ENCODE measurements at regions of chr1 and their contacts with region 1.

Region 1: GRCh38 chr1:212469701-212470458 is 37.2 kb downstream of the NENF start:
- DNase-seq: no peak
- ATAC-seq: no peak
- H3K4me3 ChIP-seq: no peak overlapping the region
- H3K4me3 Mint-ChIP-seq: no peak overlapping the region
- H3K27ac ChIP-seq: no peak overlapping the region
- H3K27ac Mint-ChIP-seq: no peak overlapping the region
- H3K4me1 ChIP-seq: no peaks in the 10 kb centered on the region
- H3K4me1 Mint-ChIP-seq: no peaks in the 10 kb centered on the region
- H3K27me3 ChIP-seq: no peaks in the 10 kb centered on the region
- H3K27me3 Mint-ChIP-seq: no peaks in the 10 kb centered on the region
- CTCF ChIP-seq: no peak

Region 2: GRCh38 chr1:212440419-212440818 is 29.5 kb before region 1 on chr1:
- CTCF ChIA-PET with region 1: no interaction called
- POLR2A ChIA-PET with region 1: no interaction called
- intact Hi-C with region 1: loop called in 1 of 2 experiments (anchors 1 kb)
- DNase-seq: no peak
- ATAC-seq: no peak
- H3K4me3 ChIP-seq: no peak overlapping the region
- H3K4me3 Mint-ChIP-seq: no peak overlapping the region
- H3K27ac ChIP-seq: no peak overlapping the region
- H3K27ac Mint-ChIP-seq: no peak overlapping the region
- H3K4me1 ChIP-seq: no peaks in the 10 kb centered on the region
- H3K4me1 Mint-ChIP-seq: peaks cover 11% of the 10 kb centered on the region
- H3K27me3 ChIP-seq: no peaks in the 10 kb centered on the region
- H3K27me3 Mint-ChIP-seq: no peaks in the 10 kb centered on the region
- CTCF ChIP-seq: no peak